Posterior cingulate gyrus (tissue), 11 donors: ENCODE measurements at regions of chr9 and their contacts with region 1.

Region 1: DNA sequence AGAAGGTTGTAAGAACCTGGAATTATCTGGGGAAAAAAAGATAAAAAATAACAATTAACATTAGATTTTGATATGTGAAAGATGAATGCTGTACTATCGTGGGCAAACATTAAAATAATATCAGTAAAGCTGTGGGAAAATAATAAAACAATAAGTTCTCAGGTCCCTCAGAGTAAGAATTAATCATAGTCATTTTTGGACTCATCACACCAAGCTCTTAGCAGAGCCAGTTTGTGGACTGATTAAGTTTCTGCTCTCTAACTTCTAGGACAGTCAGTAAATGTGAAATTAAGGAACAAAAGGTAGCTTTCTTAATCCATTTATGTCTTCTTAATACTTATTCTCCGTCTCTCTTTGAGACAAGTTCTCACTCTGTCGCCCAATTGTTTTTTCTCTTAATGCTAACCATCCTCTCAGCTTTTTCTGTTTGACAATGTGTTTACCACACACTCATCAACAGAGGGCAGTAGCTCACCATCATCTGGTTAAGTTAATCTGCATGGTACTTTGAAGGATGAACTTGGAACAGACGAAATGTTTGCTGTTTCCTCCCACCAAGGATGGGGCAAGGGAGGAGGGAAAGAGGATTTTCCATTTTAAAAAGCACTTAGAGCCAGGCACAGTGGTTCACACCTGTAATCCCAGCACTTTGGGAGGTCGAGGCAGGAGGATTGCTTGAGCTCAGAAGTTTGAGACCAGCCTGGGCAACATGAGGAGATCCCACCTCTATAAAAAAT is 5.3 kb upstream of the ACO1 start:
- DNase-seq: peak in 2 of 10 donors; percentile 17 to 41

Region 2: DNA sequence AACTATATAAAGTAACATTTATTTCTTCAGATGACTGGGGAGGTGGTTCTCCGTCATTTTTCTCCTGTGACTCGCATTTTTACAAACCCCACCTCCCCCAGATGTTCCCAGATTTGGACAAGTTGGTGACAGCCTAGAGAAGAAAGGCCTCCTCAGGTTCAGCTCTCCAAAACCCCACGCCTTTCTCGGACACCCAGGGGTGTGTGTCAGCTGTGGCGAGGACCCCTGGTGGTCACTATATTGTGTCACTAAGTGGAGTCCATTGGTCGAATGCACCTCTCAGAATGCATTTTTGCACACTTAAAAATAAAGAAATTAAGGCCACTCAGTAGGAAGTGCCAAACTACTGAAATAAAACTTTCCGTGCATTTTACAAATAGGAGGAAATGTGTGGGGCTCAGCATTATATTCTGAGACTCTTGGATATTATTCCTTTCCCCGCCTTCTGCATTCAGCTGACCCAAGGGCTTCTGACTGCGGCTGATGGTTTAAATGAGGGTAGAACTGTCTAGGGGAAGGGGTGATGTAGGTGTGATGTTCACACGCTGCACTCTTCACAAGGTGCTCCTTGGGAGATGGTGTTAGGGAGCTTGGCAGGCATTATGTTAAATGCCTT is 52.9 kb after region 1 on chr9:
- intact Hi-C with region 1: loop called (anchors 1 kb)
- DNase-seq: peak in 3 of 10 donors; percentile 31 to 74 (median 72)

Region 3: GRCh38 chr9:32526041-32526706 is 147.0 kb after region 1 on chr9 and contains the start of gene RIGI:
- intact Hi-C with region 1: loop called (anchors 2 kb)
- DNase-seq: peak; percentile 74 to 97 (median 86)

Region 4: DNA sequence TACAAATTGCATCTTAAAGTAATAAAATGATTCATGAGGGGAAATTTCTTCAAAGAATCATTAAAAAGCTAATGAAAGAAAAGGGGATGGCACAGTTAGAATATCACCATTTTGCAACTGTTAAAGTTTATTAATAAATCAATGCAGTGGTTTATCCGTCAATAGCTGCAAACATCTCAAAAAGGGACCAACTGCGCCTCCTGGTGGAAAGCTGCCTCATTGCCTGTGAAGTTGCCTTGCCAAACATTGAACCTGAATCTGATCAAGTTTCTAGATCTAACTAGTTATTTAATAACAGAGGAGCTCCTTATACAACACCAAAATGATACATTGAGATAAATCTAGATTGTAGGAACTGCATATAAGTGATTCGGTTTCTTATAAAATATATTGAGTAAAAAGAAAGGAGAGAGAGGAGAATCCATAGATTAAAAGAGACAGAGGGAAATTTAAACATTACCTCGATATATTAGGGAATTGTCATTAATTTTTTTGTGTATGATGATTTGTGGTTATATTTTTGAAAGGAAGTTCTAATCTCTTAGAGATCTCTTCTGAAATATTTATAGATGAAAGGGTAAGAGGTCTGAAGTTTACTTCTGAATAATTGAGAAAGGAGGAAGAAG is 200.7 kb after region 1 on chr9:
- intact Hi-C with region 1: loop called (anchors 1 kb)
- DNase-seq: peak; percentile 20 to 95 (median 78)

Region 5: GRCh38 chr9:32968101-32969011 is 589.2 kb after region 1 on chr9:
- intact Hi-C with region 1: loop called (anchors 2 kb)
- DNase-seq: peak in 7 of 10 donors; percentile 22 to 83 (median 66)